ENCODE measurements at regions of chr20 and their contacts with region 1.

Region 1: GRCh38 chr20:55322745-55323144 is 682.6 kb downstream of the CBLN4 start:
- DNase-seq: no peak
- ATAC-seq: no peak
- H3K4me3 ChIP-seq: no peak overlapping the region; a peak in 1 of 6 replicates
- H3K27ac ChIP-seq: no peak overlapping the region
- H3K4me1 ChIP-seq: no peaks in the 10 kb centered on the region
- H3K27me3 ChIP-seq: no peaks in the 10 kb centered on the region
- CTCF ChIP-seq: no peak
- EP300 ChIP-seq: no peak
- POLR2A ChIP-seq: no peak
- RAD21 ChIP-seq: no peak

Region 2: GRCh38 chr20:55333798-55334197 is 11.1 kb after region 1 on chr20:
- CTCF ChIA-PET with region 1: no interaction called
- POLR2A ChIA-PET with region 1: no interaction called
- in situ Hi-C with region 1: no loop called
- intact Hi-C with region 1: loop called (anchors 1 kb)
- DNase-seq: no peak
- ATAC-seq: no peak
- H3K4me3 ChIP-seq: no peak overlapping the region
- H3K27ac ChIP-seq: no peak overlapping the region
- H3K4me1 ChIP-seq: no peaks in the 10 kb centered on the region
- H3K27me3 ChIP-seq: no peaks in the 10 kb centered on the region
- CTCF ChIP-seq: no peak
- EP300 ChIP-seq: no peak
- POLR2A ChIP-seq: no peak
- RAD21 ChIP-seq: no peak